ENCODE measurements at regions of chr10 and their contacts with region 1.

Region 1: DNA sequence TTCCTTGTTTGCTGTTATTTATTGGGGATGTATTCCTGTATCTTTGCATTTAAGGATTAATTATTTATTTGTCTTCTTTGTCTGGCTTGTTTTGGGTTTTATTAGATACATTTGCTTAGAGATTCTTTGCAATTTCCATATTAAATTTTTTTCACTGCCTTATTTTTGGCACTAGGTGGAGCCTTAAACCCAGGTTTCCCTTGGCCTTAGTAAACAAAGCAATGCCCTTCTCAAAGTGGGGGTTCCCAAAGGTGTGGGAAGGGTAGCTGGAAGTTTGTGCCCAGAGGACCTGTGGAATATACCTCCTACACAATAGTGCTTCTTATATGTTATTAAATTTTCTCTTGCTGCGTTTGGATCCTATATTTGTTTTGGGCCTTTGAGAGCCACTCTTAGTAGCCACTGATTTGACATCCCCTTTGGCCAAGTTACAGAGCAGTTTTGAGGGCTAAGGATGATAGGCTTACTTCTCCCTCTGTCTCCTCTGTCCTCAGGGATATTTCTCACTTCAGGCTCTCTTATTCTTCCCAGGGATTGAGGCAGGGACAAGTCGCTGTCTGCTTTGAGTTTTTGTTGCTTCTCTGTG is 162.3 kb downstream of the ITGB1 start:
- DNase-seq: no peak
- ATAC-seq: peak; percentile 47 to 79 (median 61)
- H3K4me3 ChIP-seq: no peak overlapping the region
- H3K27ac ChIP-seq: no peak overlapping the region
- H3K4me1 ChIP-seq: no peaks in the 10 kb centered on the region
- H3K27me3 ChIP-seq: no peaks in the 10 kb centered on the region
- CTCF ChIP-seq: peak; percentile 67 to 76 (median 72)
- POLR2A ChIP-seq: no peak

Region 2: GRCh38 chr10:32746869-32747268 is 48.8 kb before region 1 on chr10:
- intact Hi-C with region 1: no loop called
- DNase-seq: no peak
- ATAC-seq: no peak
- H3K4me3 ChIP-seq: no peak overlapping the region
- H3K27ac ChIP-seq: no peak overlapping the region
- H3K4me1 ChIP-seq: no peaks in the 10 kb centered on the region
- H3K27me3 ChIP-seq: no peaks in the 10 kb centered on the region
- CTCF ChIP-seq: no peak
- POLR2A ChIP-seq: no peak

Region 3: DNA sequence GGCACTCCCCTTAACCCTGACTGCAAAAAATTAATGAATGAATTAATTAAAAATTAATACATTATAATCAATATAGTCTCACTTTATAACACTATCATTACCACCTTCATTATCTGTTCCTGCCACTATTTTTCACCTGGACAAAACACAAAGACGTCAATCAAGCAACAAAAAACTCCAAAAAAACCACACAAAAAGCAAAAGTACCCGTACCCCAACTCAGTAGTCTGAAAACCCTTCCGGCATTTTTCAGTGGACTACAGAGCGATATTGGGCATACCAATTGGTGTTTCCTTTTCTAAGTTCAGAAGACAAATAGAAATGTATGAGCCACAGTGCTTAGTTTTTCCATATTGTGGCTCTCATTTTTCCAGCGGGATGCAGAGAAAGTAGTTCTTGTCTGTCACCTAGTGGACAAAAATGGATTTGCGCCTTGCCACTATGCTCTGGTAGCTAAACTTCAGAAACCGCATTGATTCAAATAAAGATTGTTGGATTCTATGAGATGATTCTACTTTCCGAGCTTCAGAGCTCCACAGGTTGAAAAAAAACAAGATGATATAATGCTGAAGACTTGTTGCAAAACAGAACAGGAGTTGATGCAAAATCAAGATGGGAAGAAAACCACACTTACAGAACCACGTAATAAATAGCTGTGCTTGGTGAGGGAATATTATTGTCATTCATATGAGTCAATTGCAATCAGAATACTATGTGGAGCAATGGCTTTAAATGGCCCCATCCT is 213.0 kb after region 1 on chr10:
- intact Hi-C with region 1: loop called (anchors 5 kb)
- DNase-seq: peak in 1 of 3 donors; percentile 63
- ATAC-seq: peak; percentile 51 to 67 (median 63)
- H3K4me3 ChIP-seq: no peak overlapping the region
- H3K27ac ChIP-seq: no peak overlapping the region
- H3K4me1 ChIP-seq: peaks cover 0 to 27% (median 4%) of the 10 kb centered on the region in 4 donors
- H3K27me3 ChIP-seq: no peaks in the 10 kb centered on the region
- CTCF ChIP-seq: peak; percentile 97 to 99 (median 98)
- POLR2A ChIP-seq: no peak